Naive thymus-derived CD4-positive, alpha-beta T cell (primary cell): ENCODE measurements at regions of chr2 and their contacts with region 1.

Region 1: GRCh38 chr2:102442967-102443828 is 20.2 kb downstream of the IL18RAP start:
- DNase-seq: peak in 7 of 9 donors; percentile 16 to 58 (median 49)
- ATAC-seq: peak; percentile 89
- H3K4me3 ChIP-seq: no peak overlapping the region
- H3K4me3 Mint-ChIP-seq: peak overlapping the region in 6 of 10 donors; percentile 24 to 71 (median 36)
- H3K27ac ChIP-seq: no peak overlapping the region
- H3K27ac Mint-ChIP-seq: peak overlapping the region in 4 of 9 donors; percentile 19 to 46 (median 30)
- H3K4me1 ChIP-seq: peaks cover 0 to 5% of the 10 kb centered on the region in 2 donors
- H3K4me1 Mint-ChIP-seq: peaks cover 0 to 12% (median 7%) of the 10 kb centered on the region in 7 donors
- H3K27me3 ChIP-seq: no peaks in the 10 kb centered on the region
- H3K27me3 Mint-ChIP-seq: no peaks in the 10 kb centered on the region

Region 2: DNA sequence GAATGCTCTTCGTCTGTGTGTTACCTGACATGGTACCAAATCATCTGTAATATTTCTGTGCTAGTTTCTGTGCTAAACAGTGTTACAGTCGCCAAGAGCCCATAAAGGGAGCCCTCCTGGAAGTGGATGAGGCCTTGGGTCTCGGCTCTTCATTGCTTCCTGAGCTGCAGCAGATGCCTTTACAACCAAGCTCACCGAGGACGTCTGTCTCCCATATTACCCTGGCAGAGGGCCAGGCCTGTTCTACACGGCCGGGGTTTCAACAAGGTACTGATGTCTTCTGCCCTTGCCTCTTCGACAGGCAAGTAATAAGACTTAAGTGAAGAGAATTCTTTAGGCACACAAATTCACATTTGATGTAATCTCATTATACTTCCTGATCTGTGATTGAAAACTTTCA is 1424.3 kb before region 1 on chr2:
- CTCF ChIA-PET with region 1: no interaction called
- POLR2A ChIA-PET with region 1: no interaction called
- intact Hi-C with region 1: no loop called
- DNase-seq: no peak
- ATAC-seq: no peak
- H3K4me3 ChIP-seq: no peak overlapping the region
- H3K4me3 Mint-ChIP-seq: no peak overlapping the region
- H3K27ac ChIP-seq: no peak overlapping the region
- H3K27ac Mint-ChIP-seq: peak overlapping the region in 3 of 9 donors; percentile 25 to 79 (median 56)
- H3K4me1 ChIP-seq: no peaks in the 10 kb centered on the region
- H3K4me1 Mint-ChIP-seq: peaks cover 0 to 6% (median 0%) of the 10 kb centered on the region in 7 donors
- H3K27me3 ChIP-seq: no peaks in the 10 kb centered on the region
- H3K27me3 Mint-ChIP-seq: no peaks in the 10 kb centered on the region

Region 3: DNA sequence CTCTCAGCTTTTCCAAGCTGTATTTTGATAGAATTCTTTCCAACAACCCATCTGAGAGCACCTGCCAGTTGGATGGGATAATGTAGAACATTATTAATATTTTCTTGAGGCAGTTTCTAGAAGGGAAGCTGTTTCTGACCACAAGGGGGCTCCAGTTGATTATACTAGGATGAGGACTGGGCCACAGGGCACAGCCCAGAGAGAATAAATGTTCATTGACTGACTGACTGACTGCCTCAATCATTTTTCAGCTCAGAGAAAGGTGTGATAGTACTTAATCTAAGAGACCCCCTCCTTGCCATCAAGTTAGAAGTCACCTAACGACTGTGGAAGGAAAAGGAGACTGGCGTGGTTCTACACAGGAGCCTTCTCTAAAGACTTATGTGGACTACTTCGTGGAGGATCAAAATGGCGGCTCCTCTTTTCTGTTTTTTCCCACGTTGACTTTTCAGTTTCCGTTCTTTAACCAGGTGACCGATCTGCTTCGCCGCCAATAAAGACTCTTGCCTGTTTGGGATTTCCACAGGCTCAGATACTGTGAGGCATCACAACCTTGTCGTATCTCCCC is 1024.0 kb before region 1 on chr2:
- CTCF ChIA-PET with region 1: no interaction called
- POLR2A ChIA-PET with region 1: no interaction called
- intact Hi-C with region 1: loop called in 1 of 2 experiments (anchors 5 kb)
- DNase-seq: peak in 8 of 9 donors; percentile 41 to 74 (median 68)
- ATAC-seq: peak; percentile 87
- H3K4me3 ChIP-seq: no peak overlapping the region
- H3K4me3 Mint-ChIP-seq: no peak overlapping the region
- H3K27ac ChIP-seq: no peak overlapping the region
- H3K27ac Mint-ChIP-seq: peak overlapping the region in 1 of 9 donors; percentile 64
- H3K4me1 ChIP-seq: no peaks in the 10 kb centered on the region
- H3K4me1 Mint-ChIP-seq: peaks cover 0 to 5% (median 0%) of the 10 kb centered on the region in 7 donors
- H3K27me3 ChIP-seq: no peaks in the 10 kb centered on the region
- H3K27me3 Mint-ChIP-seq: peaks cover 0 to 6% (median 0%) of the 10 kb centered on the region in 5 donors

Region 4: GRCh38 chr2:102020596-102021181 is 422.5 kb before region 1 on chr2:
- CTCF ChIA-PET with region 1: interaction called, 9 read pairs
- POLR2A ChIA-PET with region 1: no interaction called
- intact Hi-C with region 1: loop called (anchors 1 kb)
- DNase-seq: peak; percentile 61 to 82 (median 76)
- ATAC-seq: peak; percentile 96
- H3K4me3 ChIP-seq: no peak overlapping the region
- H3K4me3 Mint-ChIP-seq: no peak overlapping the region
- H3K27ac ChIP-seq: no peak overlapping the region
- H3K27ac Mint-ChIP-seq: no peak overlapping the region
- H3K4me1 ChIP-seq: no peaks in the 10 kb centered on the region
- H3K4me1 Mint-ChIP-seq: peaks cover 0 to 12% (median 0%) of the 10 kb centered on the region in 7 donors
- H3K27me3 ChIP-seq: no peaks in the 10 kb centered on the region
- H3K27me3 Mint-ChIP-seq: peaks cover 0 to 5% (median 0%) of the 10 kb centered on the region in 5 donors

Region 5: DNA sequence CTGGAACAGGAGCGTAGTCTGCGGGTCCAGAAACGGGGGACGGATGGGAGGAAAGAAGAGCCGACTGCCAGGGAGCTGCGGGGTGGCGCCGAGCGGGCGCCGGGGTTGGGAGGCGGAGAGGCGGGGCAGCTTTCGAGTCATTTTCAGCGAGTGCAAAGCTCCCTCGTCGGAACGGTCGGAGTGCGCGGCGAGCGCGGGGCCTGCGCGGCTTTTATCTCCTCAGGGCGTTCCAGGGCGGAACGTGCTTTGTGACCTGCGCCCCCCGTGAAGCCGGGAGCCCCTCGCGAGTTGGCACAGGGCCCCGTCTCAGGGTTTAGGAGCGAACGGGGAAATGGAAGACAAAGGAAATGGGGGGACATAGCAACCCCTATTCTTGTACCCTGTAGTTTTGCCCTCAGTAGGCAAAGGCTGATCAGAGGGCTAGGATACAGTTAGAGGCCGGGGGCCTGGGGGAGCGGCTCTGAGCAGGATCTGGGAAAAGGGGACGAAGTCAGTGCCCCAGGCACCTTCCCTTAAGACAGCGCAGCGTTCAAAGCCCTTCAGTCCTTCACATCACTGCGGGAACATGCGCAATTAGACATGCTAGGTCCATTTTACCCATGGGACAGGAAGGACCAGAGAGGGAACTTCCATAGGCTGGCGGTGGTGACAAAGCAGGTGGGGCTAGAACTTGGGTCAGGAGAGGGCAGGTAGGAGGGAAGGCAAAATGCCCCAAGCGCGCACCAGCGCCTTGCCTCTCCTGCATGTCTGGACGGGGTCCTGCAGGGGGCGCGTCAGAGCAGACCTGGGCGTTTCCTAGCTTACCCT is 192.0 kb before region 1 on chr2:
- CTCF ChIA-PET with region 1: interaction called, 12 read pairs
- POLR2A ChIA-PET with region 1: no interaction called
- intact Hi-C with region 1: loop called (anchors 1 kb)
- DNase-seq: peak; percentile 28 to 63 (median 57)
- ATAC-seq: peak; percentile 90
- H3K4me3 ChIP-seq: peak overlapping the region; percentile 75
- H3K4me3 Mint-ChIP-seq: peak overlapping the region; percentile 86 to 99 (median 94)
- H3K27ac ChIP-seq: no peak overlapping the region
- H3K27ac Mint-ChIP-seq: peak overlapping the region in 7 of 9 donors; percentile 56 to 94 (median 78)
- H3K4me1 ChIP-seq: peaks cover 0 to 18% of the 10 kb centered on the region in 2 donors
- H3K4me1 Mint-ChIP-seq: peaks cover 7 to 44% (median 14%) of the 10 kb centered on the region in 7 donors
- H3K27me3 ChIP-seq: no peaks in the 10 kb centered on the region
- H3K27me3 Mint-ChIP-seq: peaks cover 0 to 5% (median 2%) of the 10 kb centered on the region in 5 donors

Region 6: DNA sequence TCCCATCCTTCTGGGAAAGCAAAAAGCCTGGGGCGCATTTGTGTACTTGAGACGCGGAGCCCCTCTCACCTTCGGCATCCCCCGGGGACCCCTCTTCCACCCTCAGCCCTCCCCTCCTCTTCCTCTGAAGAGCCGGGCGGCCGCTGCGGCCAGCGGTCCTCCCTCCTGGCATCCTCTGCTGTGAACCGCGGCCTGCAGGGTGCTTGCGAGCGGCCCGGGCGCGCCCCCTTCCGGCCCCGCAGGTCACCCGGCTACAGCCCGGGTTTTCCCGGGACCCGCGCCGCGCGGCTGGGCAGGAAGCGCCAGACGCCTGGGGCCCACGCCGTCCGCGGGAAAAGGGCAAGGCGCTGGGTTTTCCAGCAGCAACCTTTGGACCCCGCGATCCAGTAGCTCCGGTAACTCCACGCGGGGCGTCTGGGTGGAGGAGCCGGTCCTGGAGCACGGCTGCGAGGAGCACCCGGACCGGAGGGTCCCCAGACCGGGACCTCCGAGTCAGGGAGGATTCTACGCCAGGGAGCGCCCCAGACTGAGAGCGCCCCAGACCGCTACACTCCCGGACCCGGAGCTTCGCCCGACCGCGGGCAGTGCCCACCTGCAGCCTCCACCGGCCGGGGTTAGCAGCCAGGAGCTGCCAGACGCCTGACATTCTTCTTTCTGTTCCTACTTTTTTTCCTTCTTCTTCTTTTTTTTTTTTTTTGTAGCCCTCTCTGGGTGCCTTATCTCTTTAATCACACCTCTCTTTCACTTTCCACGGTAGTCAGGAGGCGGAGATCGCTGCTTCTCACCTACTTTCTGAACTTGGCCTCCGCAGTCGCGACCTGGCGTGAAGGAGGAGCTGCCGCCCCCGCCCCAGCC is 87.4 kb before region 1 on chr2 and contains the start of gene IL18R1:
- CTCF ChIA-PET with region 1: no interaction called
- POLR2A ChIA-PET with region 1: no interaction called
- intact Hi-C with region 1: loop called (anchors 1 kb)
- DNase-seq: peak; percentile 37 to 85 (median 57)
- ATAC-seq: peak; percentile 93
- H3K4me3 ChIP-seq: peak within 1 kb of the TSS; percentile 82
- H3K4me3 Mint-ChIP-seq: peak within 1 kb of the TSS; percentile 93 to 99 (median 96)
- H3K27ac ChIP-seq: peak within 1 kb of the TSS; percentile 79
- H3K27ac Mint-ChIP-seq: peak within 1 kb of the TSS; percentile 83 to 96 (median 92)
- H3K4me1 ChIP-seq: peaks cover 6 to 19% of the 10 kb centered on the region in 2 donors
- H3K4me1 Mint-ChIP-seq: peaks cover 17 to 48% (median 37%) of the 10 kb centered on the region in 7 donors
- H3K27me3 ChIP-seq: no peaks in the 10 kb centered on the region
- H3K27me3 Mint-ChIP-seq: no peaks in the 10 kb centered on the region
- total RNA-seq, gene IL18R1: 2.1 to 52.8 (median 5.3) TPM